ENCODE measurements at regions of chr11 and their contacts with region 1.

Region 1: DNA sequence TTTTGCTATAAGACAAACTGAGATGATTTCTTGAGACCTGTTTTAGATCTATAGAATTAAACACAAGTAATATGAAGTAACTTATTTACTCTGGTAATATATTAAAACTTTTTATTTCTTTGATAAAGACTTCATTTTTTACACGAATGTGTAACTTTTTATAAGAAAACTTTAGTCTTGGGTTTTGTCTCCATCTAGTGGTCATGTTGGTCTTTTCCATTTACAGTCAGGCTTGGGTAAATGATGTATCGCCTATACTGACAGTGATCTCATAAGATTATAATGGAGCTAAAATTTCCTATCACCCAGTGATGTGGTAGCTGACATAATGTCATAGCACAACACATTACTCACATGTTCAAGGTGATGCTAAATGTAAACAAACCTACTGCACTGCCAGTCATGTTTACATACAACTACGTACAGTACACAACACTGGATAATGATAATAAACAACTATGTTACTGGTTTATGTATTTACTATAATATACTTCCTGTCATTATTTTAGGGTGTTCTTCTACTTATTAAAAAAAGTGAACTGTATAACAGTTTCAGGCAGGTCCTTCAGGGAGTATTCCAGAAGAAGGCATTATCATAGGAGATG is 7.5 kb upstream of the C11orf97 start:
- H3K4me3 ChIP-seq: no peak overlapping the region
- H3K27ac ChIP-seq: no peak overlapping the region
- H3K4me1 ChIP-seq: no peaks in the 10 kb centered on the region
- CTCF ChIP-seq: no peak

Region 2: DNA sequence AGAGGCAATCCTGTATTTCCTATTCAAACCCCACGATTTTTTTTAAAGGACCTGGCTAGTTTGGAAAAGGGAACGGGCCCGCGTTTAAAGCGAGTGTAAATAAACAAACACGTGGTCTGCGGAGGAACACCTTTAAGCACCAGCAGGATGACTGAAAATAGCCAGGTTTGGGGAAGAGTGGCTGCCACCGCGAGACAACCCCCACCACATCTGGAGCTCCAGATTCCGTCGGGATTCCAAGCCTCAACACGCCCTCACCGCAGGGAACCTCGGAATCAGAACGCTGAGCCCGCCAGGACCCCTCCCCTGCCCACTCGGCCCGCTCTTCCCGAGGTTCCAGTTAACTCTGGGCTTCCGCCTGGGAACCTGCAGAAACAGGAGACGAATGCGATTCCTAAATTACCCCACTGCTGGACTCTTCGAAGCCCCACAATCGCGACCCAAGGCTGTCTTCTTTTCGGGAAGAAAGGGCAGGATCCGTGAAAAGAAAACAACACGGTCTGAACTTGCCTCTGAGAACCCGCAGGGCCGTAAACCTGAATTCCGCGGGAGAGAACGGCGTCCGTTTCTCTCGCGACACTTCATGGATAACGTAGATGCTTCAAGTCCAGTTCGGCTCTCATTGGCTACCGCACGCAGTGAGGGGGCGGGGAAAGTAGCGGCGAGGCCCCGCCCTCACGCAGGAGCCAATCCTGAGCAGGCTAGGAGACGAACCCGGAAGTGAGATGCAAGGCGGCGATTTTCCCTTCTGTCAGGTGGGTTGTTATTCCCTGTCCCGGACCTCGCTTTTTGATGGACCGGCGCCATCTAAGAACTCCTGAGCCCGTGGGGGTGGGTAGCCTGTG is 11.3 kb before region 1 on chr11 and contains the starts of genes ANKRD49 and MRE11:
- CTCF ChIA-PET with region 1: interaction called, 11 read pairs
- POLR2A ChIA-PET with region 1: interaction called, 5 read pairs
- H3K4me3 ChIP-seq: peak within 1 kb of the TSS; percentile 93
- H3K27ac ChIP-seq: peak within 1 kb of the TSS; percentile 98
- H3K4me1 ChIP-seq: no peaks in the 10 kb centered on the region
- CTCF ChIP-seq: no peak

Region 3: DNA sequence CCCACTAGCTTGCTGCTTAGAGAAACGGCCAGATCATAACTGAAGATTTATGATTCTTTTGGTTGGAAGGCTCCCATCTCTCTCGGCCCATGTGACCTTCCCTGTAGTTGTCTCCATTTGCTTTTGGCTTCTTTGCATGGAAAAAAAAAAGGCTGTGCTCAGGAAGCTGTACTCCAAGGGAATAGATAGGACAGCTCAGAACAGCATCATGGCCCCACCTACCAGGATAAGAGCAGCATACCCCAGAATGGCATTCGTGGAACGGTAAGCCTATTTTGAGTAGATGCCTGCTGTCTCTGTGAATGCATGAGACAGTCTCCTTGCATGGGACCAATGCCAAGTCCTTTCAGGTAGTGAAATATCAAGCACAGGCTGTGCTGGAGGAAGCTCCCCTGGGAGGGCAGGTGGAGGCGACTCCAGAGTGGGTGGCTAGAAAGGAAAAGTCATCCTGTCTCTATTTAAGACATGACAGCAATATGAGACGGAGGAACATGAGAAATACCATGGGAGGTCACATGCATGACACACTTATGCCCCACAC is 169.2 kb after region 1 on chr11:
- CTCF ChIA-PET with region 1: no interaction called
- POLR2A ChIA-PET with region 1: no interaction called
- H3K4me3 ChIP-seq: no peak overlapping the region
- H3K27ac ChIP-seq: no peak overlapping the region
- H3K4me1 ChIP-seq: no peaks in the 10 kb centered on the region
- CTCF ChIP-seq: no peak